Right lobe of liver (tissue), 6 donors: ENCODE measurements at regions of chr4 and their contacts with region 1.

Region 1: DNA sequence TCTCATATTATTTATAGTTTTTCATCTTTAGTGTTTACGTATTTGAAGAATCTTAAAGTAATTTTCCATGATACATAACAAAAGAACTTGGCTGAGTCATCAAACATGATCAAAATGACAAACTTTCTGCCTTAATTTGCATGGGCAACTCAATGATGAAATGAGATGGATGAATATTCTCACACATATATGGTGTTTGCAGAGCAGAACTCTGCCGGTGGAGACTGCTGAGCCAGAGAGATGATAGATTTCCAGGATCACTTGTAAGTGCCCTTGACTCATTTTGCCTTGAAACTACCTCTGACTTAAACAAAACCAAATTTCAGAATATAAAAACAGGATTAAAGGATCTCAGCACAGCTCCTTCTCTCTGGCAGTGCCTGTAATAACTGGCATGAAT is 38.2 kb downstream of the TRPC3 start:
- DNase-seq: no peak
- ATAC-seq: no peak
- H3K4me3 ChIP-seq: no peak overlapping the region
- H3K27ac ChIP-seq: no peak overlapping the region
- H3K4me1 ChIP-seq: no peaks in the 10 kb centered on the region
- H3K27me3 ChIP-seq: no peaks in the 10 kb centered on the region
- CTCF ChIP-seq: no peak
- POLR2A ChIP-seq: no peak

Region 2: DNA sequence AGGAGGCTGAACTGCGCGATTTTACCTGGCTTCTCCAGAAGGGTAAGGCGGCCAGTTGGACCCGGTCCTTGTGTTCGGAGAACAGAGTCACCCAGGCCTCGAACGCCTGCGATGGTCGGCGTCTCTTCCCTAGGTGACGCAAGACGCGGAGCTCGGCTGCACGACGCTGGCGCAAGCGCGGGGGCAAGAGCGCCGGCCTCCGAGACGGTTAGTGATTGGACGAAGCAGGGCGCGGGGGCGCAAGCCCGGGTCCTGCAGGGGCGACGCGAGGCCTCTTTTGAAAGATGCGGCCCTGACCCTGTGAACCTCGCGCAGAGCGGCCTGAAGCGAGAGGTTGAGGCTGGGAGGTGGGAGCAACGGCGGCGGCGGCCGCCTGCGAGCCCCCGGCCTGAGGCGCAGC is 465.6 kb after region 1 on chr4:
- intact Hi-C with region 1: loop called in 1 of 2 experiments (anchors 10 kb)
- DNase-seq: no peak
- ATAC-seq: peak in 1 of 4 donors; percentile 36
- H3K4me3 ChIP-seq: no peak overlapping the region
- H3K27ac ChIP-seq: no peak overlapping the region
- H3K4me1 ChIP-seq: no peaks in the 10 kb centered on the region
- H3K27me3 ChIP-seq: no peaks in the 10 kb centered on the region
- CTCF ChIP-seq: no peak
- POLR2A ChIP-seq: no peak